ENCODE measurements at regions of chr2 and their contacts with region 1.

Region 1: DNA sequence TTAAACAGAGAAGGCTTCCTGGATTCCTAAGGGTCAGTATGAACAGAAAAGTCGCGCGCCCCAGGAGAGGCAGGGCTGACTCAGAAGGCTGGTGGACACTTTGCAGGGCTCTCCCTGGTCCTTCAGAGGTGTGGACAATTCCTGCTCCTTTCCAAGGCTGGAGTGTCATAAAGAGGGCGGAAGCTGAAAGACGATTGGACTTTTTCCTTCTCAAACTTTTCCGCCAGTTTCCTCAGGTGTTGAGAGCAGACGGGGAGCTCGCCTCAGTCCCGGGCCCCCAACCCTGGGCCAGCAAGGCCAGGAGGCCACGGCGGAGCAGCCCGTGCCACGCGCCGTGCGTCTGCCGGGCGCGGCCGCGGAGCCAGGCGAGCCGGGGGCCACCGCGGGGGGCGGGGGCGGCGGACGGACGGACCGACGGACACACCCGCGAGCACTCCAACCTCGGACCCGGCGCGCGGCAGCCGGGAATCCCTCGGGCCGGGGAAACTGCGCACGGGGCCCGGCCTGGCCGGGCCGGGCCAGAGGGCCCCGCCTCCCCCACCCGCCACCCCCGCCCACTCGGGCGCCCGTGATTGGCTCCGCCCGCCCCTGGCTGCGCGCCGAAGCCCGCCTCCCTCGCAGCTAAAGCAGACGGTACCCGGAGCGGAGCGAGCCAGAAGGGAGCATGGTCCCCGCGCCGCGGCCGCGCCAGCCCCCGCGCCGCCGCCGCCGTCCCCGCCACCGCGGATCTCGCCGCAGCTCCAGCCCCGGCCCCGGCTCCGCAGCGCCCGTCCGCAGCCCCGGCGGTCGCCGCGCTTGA is at the start of gene KLHL29:
- DNase-seq: peak; percentile 83
- ATAC-seq: peak; percentile 71
- H3K4me3 Mint-ChIP-seq: peak within 1 kb of the TSS; percentile 76
- H3K27ac Mint-ChIP-seq: peak within 1 kb of the TSS; percentile 34
- H3K4me1 Mint-ChIP-seq: peaks cover 25% of the 10 kb centered on the region
- H3K27me3 Mint-ChIP-seq: peaks cover 54% of the 10 kb centered on the region
- total RNA-seq, gene KLHL29: 1.7 to 2.0 TPM

Region 2: GRCh38 chr2:23092831-23093230 is 291.9 kb before region 1 on chr2:
- CTCF ChIA-PET with region 1: no interaction called
- POLR2A ChIA-PET with region 1: no interaction called
- intact Hi-C with region 1: no loop called
- DNase-seq: no peak
- ATAC-seq: no peak
- H3K4me3 Mint-ChIP-seq: no peak overlapping the region
- H3K27ac Mint-ChIP-seq: no peak overlapping the region
- H3K4me1 Mint-ChIP-seq: no peaks in the 10 kb centered on the region
- H3K27me3 Mint-ChIP-seq: no peaks in the 10 kb centered on the region

Region 3: DNA sequence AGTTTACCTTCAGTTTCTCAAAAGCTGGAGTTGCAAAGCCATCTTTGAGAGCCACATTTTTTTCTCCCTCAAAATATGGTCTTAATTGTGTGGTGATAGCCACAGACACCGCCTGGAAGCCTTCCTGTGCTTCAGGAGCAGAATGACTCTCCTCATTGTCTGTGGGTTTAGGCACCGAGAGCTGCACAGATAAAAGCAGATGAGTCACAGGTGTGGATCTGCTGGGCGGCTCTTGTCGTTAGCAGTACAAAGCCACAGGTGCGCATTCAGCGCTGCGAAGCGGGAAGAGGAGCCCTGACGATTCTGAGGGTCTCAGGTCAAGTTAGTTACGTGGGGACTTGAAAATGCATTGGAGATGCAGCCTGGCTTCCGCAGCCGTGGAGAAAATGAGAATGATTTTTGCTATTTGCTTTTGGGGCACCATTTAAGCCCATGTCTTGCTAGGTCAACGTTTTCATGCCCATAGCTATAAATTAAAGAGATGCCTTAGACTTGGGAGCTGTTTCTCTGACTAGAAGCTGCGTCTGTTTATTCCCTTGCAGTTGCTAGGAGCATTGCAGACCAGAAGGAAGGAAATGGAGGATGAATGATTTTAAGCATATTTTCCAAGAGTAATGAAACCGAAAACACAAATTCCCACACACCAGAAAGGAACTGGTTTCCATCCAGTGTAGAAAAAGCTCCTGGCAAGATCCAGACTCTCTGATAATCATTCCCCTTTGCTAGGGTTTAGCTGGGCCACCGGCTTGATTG is 51.8 kb after region 1 on chr2:
- CTCF ChIA-PET with region 1: no interaction called
- POLR2A ChIA-PET with region 1: no interaction called
- intact Hi-C with region 1: loop called in 1 of 2 experiments (anchors 2 kb)
- DNase-seq: peak; percentile 72
- ATAC-seq: peak; percentile 100
- H3K4me3 Mint-ChIP-seq: no peak overlapping the region
- H3K27ac Mint-ChIP-seq: no peak overlapping the region
- H3K4me1 Mint-ChIP-seq: peaks cover 14% of the 10 kb centered on the region
- H3K27me3 Mint-ChIP-seq: peaks cover 21% of the 10 kb centered on the region

Region 4: DNA sequence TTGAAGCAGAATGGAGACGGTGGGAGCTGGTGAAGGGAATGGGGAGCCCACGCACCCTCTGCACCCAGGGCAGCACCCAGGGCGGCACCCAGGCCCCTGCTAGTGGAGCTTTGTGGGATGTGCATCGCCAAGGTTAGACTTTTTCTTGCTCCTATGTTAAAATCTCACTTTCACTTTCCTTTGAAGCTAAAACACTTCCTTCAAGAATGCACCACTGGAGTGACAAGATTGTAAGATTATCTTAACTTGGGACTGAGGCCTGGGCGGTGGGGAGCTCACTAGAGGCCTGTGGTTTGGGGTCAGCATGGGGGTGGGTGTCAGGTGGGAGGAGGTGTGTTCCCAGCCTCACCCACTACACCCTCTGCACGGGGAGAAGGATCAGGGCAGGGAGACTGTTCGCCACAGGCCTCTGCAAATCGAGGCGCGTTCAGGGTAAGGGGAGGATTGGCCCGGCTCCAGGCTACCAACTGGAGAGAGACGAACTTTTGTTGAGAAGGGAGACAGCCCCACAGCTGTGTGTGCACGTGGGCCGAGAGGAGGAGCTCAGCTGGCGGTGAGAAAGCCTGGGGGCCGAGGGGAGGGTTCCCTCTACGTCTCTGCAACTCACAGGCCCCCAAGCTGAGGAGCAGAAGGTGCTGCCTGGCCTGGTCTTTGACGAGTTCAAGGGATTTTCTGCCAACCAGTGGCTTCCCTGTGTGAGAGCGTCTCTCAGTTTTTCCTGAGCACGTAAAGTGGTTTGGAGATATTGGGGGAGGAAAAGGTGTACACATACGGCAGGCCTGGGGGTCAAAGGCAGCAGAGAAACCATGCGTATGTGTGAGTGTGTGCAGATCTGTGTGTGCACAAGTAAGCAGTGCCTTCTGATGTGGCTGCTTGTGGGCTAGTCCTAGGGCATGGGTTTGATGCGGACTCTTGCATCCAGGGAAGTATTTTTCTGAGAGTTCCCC is 147.9 kb after region 1 on chr2:
- CTCF ChIA-PET with region 1: no interaction called
- POLR2A ChIA-PET with region 1: no interaction called
- intact Hi-C with region 1: loop called in 1 of 2 experiments (anchors 2 kb)
- DNase-seq: peak; percentile 69
- ATAC-seq: peak; percentile 84
- H3K4me3 Mint-ChIP-seq: peak overlapping the region; percentile 79
- H3K27ac Mint-ChIP-seq: peak overlapping the region; percentile 97
- H3K4me1 Mint-ChIP-seq: peaks cover 32% of the 10 kb centered on the region
- H3K27me3 Mint-ChIP-seq: no peaks in the 10 kb centered on the region